Activated T-helper 2 cell treated with anti-CD3 and anti-CD28 coated beads, Interferon-gamma antibody, Interleukin-2, Interleukin-4, amounts not matched to agents 10 μg/mL and 5 μg/mL and 100 μg/mL, durations not matched to agents 14 hours and 24 hours and 36 hours (primary cell): ENCODE measurements at regions of chr16 and their contacts with region 1.

Region 1: GRCh38 chr16:67159593-67160406 is at the starts of genes FBXL8 and TRADD:
- DNase-seq: peak; percentile 79
- H3K4me3 Mint-ChIP-seq: peak within 1 kb of the TSS; percentile 91
- H3K27ac Mint-ChIP-seq: peak within 1 kb of the TSS; percentile 85
- H3K4me1 Mint-ChIP-seq: peaks cover 44% of the 10 kb centered on the region
- H3K27me3 Mint-ChIP-seq: peaks cover 8% of the 10 kb centered on the region
- total RNA-seq, gene FBXL8: 26.4 and 26.7 TPM in 2 replicates
- total RNA-seq, gene TRADD: 35.0 and 38.3 TPM in 2 replicates

Region 2: DNA sequence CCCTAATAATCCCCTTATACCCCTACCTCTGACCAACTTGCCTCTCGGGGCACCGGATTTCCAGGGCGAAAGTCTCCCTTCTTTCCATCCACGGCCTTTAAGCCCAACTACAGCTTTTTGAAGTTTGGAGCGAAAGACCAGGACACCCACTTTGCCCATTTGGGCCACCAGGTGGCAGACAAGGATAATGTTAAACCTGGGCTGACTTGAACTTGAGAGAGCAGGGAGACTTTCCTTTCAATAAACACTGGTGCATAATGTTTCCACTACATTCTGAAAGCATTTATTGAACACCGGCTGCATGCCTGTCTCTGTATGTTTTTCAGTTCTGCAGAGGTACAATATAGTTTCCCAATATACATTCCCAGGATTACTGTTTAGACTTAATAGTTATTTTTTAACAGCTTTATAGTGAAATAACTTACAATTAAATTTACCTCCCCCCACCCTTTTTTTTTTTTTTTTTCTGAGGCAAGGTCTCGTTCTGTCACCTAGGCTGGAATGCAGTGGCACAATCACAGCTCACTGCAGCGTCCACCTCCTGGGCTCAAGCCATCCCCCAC is 205.6 kb before region 1 on chr16:
- intact Hi-C with region 1: loop called (anchors 2 kb)
- DNase-seq: peak; percentile 72
- H3K4me3 Mint-ChIP-seq: no peak overlapping the region
- H3K27ac Mint-ChIP-seq: no peak overlapping the region
- H3K4me1 Mint-ChIP-seq: peaks cover 18% of the 10 kb centered on the region
- H3K27me3 Mint-ChIP-seq: peaks cover 24% of the 10 kb centered on the region

Region 3: DNA sequence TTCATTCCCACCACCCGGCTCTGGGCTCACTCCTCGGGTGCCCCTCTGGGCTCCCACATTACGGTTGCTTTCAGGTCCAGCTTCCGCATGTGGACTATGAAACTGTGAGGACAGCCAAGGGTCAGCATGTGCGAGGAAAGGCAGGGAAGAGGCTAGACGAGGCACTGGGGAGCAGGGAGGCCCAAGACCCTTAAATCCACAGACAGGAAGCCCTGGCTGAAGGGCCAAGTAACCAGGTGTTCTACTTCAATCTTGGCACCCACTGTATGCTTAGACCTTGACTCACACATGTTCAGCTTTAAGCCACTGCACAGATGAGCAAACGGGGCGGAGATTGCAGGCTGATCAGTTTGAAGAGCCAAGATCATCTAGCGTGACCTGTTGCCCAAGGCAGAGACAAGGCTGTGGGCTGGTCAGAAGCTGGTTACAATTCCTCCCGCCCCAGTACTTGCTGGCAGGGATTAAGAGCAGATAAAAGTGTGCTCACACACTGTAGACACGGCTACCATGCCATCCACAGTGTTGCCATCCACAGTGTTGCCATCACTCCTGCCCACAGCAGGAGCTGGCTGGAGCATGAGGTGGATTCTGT is 171.5 kb before region 1 on chr16 and contains the start of gene CES4A:
- intact Hi-C with region 1: loop called (anchors 1 kb)
- DNase-seq: no peak
- H3K4me3 Mint-ChIP-seq: peak within 1 kb of the TSS; percentile 61
- H3K27ac Mint-ChIP-seq: peak within 1 kb of the TSS; percentile 88
- H3K4me1 Mint-ChIP-seq: peaks cover 40% of the 10 kb centered on the region
- H3K27me3 Mint-ChIP-seq: no peaks in the 10 kb centered on the region
- total RNA-seq, gene CES4A: 29.8 and 30.1 TPM in 2 replicates

Region 4: GRCh38 chr16:67109407-67110135 is 50.2 kb before region 1 on chr16 and contains the start of gene PHAF1:
- intact Hi-C with region 1: loop called (anchors 2 kb)
- DNase-seq: peak; percentile 94
- H3K4me3 Mint-ChIP-seq: peak within 1 kb of the TSS; percentile 94
- H3K27ac Mint-ChIP-seq: peak within 1 kb of the TSS; percentile 72
- H3K4me1 Mint-ChIP-seq: peaks cover 18% of the 10 kb centered on the region
- H3K27me3 Mint-ChIP-seq: no peaks in the 10 kb centered on the region
- total RNA-seq, gene PHAF1: 17.4 and 17.8 TPM in 2 replicates

Region 5: GRCh38 chr16:67183627-67184328 is 24.0 kb after region 1 on chr16 and contains the start of gene MATCAP1:
- intact Hi-C with region 1: loop called (anchors 2 kb)
- DNase-seq: peak; percentile 95
- H3K4me3 Mint-ChIP-seq: peak within 1 kb of the TSS; percentile 70
- H3K27ac Mint-ChIP-seq: no peak within 1 kb of the TSS
- H3K4me1 Mint-ChIP-seq: peaks cover 12% of the 10 kb centered on the region
- H3K27me3 Mint-ChIP-seq: peaks cover 7% of the 10 kb centered on the region
- total RNA-seq, gene MATCAP1: 57.1 and 59.5 TPM in 2 replicates